ENCODE measurements at regions of chr2 and their contacts with region 1.

Region 1: GRCh38 chr2:141620372-141620771 is 510.4 kb downstream of the LRP1B start:
- DNase-seq: no peak
- H3K4me3 ChIP-seq: no peak overlapping the region
- H3K27ac ChIP-seq: no peak overlapping the region
- H3K4me1 ChIP-seq: no peaks in the 10 kb centered on the region
- H3K27me3 ChIP-seq: no peaks in the 10 kb centered on the region
- CTCF ChIP-seq: no peak
- POLR2A ChIP-seq: no peak

Region 2: GRCh38 chr2:141647353-141647752 is 27.0 kb after region 1 on chr2:
- intact Hi-C with region 1: no loop called
- DNase-seq: no peak
- H3K4me3 ChIP-seq: no peak overlapping the region
- H3K27ac ChIP-seq: no peak overlapping the region
- H3K4me1 ChIP-seq: no peaks in the 10 kb centered on the region
- H3K27me3 ChIP-seq: no peaks in the 10 kb centered on the region
- CTCF ChIP-seq: no peak
- POLR2A ChIP-seq: no peak

Region 3: GRCh38 chr2:142254031-142254430 is 633.7 kb after region 1 on chr2:
- intact Hi-C with region 1: loop called (anchors 5 kb)
- DNase-seq: no peak
- H3K4me3 ChIP-seq: no peak overlapping the region
- H3K27ac ChIP-seq: no peak overlapping the region
- H3K4me1 ChIP-seq: no peaks in the 10 kb centered on the region
- H3K27me3 ChIP-seq: no peaks in the 10 kb centered on the region
- CTCF ChIP-seq: no peak
- POLR2A ChIP-seq: no peak